Mammary epithelial cell (primary cell): ENCODE measurements at regions of chr1 and their contacts with region 1.

Region 1: GRCh38 chr1:180785299-180785698 is 127.4 kb upstream of the KIAA1614 start:
- DNase-seq: no peak
- H3K4me3 ChIP-seq: no peak overlapping the region
- H3K27ac ChIP-seq: no peak overlapping the region
- H3K4me1 ChIP-seq: no peaks in the 10 kb centered on the region
- H3K27me3 ChIP-seq: no peaks in the 10 kb centered on the region
- CTCF ChIP-seq: no peak

Region 2: DNA sequence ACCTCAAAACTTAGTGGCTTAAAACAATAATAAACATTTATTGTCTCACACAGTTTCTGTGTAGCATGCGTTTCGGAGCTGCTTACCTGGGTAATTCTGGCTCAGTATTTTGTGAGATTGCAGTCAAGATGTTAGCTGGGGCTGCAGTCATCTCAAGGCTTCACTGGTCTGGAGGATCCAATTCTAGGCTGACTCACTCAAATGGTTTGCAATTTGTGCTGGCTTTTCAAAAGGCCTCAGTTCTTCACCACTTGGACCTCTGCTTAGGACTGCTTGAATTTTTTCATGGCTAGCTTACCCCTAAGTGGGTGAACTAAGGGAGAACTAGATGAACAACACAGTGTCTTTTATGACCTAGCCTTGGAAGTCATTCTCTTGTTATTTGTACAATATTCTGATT is 132.5 kb before region 1 on chr1:
- CTCF ChIA-PET with region 1: interaction called, 14 read pairs
- dilution Hi-C with region 1: no loop called
- in situ Hi-C with region 1: no loop called
- intact Hi-C with region 1: no loop called
- DNase-seq: no peak
- H3K4me3 ChIP-seq: no peak overlapping the region
- H3K27ac ChIP-seq: no peak overlapping the region
- H3K4me1 ChIP-seq: no peaks in the 10 kb centered on the region
- H3K27me3 ChIP-seq: no peaks in the 10 kb centered on the region
- CTCF ChIP-seq: no peak

Region 3: GRCh38 chr1:180836449-180836848 is 51.1 kb after region 1 on chr1:
- CTCF ChIA-PET with region 1: no interaction called
- dilution Hi-C with region 1: no loop called
- in situ Hi-C with region 1: no loop called
- intact Hi-C with region 1: loop called (anchors 2 kb)
- DNase-seq: no peak
- H3K4me3 ChIP-seq: no peak overlapping the region
- H3K27ac ChIP-seq: no peak overlapping the region
- H3K4me1 ChIP-seq: no peaks in the 10 kb centered on the region
- H3K27me3 ChIP-seq: no peaks in the 10 kb centered on the region
- CTCF ChIP-seq: no peak